ENCODE measurements at regions of chr7 and their contacts with region 1.

Region 1: GRCh38 chr7:76314042-76314721 is 11.7 kb downstream of the HSPB1 start:
- DNase-seq: peak; percentile 98

Region 2: GRCh38 chr7:75957012-75957736 is 357.0 kb before region 1 on chr7:
- intact Hi-C with region 1: no loop called
- DNase-seq: no peak

Region 3: GRCh38 chr7:76179686-76180085 is 134.5 kb before region 1 on chr7:
- intact Hi-C with region 1: loop called (anchors 1 kb)
- DNase-seq: no peak

Region 4: GRCh38 chr7:76291343-76292212 is 22.6 kb before region 1 on chr7:
- intact Hi-C with region 1: loop called (anchors 1 kb)
- DNase-seq: peak; percentile 95

Region 5: DNA sequence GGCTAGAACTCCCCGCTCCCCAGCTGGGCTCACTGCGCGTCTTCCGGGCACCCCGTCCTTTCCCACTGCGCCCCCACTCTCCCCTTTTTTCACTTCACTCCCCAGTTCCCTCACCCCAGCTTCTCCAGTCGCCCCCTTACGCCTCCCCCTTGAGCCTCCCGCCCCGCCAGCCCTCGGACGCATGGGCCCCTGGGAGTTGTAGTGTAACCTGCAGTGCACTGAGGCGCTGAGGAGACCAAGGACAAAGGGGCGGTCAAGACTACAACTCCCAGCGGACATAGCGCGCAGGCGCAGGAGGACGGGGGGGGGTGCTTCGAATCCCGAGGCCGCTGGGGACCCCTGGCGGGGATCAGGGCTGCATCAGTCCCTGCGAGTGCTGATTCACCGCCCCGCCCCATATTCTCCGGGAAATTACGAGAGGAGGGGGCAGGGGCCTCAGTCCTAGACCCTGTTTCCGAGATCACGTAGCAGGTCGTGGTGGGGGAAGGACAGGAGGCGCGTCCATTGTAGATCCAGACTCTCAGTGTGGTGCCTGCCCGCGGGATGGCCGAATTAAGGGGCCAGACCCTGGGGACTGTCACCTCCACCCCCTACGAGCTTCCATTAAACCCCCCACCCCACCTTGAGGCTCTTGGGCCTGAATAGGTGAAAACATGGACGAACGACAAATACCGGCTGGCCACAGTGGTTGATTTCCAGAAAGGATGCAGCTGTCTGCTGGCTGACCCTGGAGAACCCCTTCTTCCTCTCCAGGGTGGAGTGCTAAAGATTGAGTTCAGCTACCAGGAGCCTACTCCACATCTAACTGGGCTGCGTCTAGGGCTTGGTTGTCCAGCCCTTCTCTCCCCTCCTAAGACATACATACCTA is 45.2 kb after region 1 on chr7:
- intact Hi-C with region 1: loop called (anchors 1 kb)
- DNase-seq: peak; percentile 99

Measured in cardiac septum (tissue), 1 donor.